ENCODE measurements at regions of chr1 and their contacts with region 1.

Region 1: GRCh38 chr1:57279909-57280666 is 143.8 kb downstream of the DAB1 start:
- DNase-seq: peak; percentile 82 to 84
- H3K4me3 ChIP-seq: no peak overlapping the region
- H3K4me3 Mint-ChIP-seq: peak overlapping the region; percentile 46
- H3K27ac Mint-ChIP-seq: peak overlapping the region; percentile 96
- H3K4me1 ChIP-seq: peaks cover 57% of the 10 kb centered on the region
- H3K4me1 Mint-ChIP-seq: peaks cover 35% of the 10 kb centered on the region
- H3K27me3 ChIP-seq: no peaks in the 10 kb centered on the region
- H3K27me3 Mint-ChIP-seq: no peaks in the 10 kb centered on the region
- CTCF ChIP-seq: no peak

Region 2: DNA sequence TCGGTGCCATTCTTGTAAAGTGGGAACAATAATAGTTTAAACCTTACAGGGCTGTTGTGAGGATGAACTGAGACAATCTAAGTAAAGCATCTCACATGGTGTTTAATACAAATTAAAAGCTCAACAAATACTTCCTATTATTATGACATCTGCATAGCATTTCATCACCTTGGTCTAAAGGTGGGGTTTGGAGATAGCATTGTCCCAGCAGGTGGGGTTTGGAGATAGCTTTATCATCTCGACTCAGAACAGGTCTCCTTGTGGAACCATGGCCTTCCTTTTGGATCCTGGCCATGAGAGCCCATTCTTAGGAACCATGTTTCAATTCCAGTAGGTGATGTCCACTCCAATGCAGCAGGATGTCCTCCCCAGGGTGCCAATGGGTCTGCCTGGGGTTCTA is 293.7 kb before region 1 on chr1:
- CTCF ChIA-PET with region 1: no interaction called
- POLR2A ChIA-PET with region 1: no interaction called
- intact Hi-C with region 1: loop called (anchors 2 kb)
- DNase-seq: no peak
- H3K4me3 ChIP-seq: no peak overlapping the region
- H3K4me3 Mint-ChIP-seq: no peak overlapping the region
- H3K27ac Mint-ChIP-seq: peak overlapping the region; percentile 67
- H3K4me1 ChIP-seq: peaks cover 25% of the 10 kb centered on the region
- H3K4me1 Mint-ChIP-seq: peaks cover 20% of the 10 kb centered on the region
- H3K27me3 ChIP-seq: no peaks in the 10 kb centered on the region
- H3K27me3 Mint-ChIP-seq: no peaks in the 10 kb centered on the region
- CTCF ChIP-seq: no peak

Region 3: DNA sequence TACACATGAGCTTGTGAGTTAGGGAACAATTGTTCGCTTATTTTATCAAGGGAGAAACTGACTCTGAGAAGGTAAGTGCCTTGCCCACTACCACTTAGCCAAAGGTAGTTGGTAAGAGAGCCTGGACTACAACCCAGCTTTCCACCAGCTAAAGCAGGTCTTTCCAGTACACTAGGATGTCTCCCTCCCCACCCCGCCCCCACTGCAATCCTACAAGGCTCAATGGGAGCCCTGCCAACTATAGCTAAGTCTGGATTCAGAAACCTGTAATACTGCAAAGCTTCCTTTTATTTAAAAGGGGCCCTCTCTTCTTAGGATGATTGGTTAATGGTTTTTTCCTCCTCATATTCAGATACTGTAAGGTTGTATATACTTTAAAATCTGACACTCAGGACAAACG is 212.2 kb before region 1 on chr1:
- CTCF ChIA-PET with region 1: no interaction called
- POLR2A ChIA-PET with region 1: no interaction called
- intact Hi-C with region 1: loop called (anchors 2 kb)
- DNase-seq: no peak
- H3K4me3 ChIP-seq: no peak overlapping the region
- H3K4me3 Mint-ChIP-seq: no peak overlapping the region
- H3K27ac Mint-ChIP-seq: no peak overlapping the region
- H3K4me1 ChIP-seq: peaks cover 16% of the 10 kb centered on the region
- H3K4me1 Mint-ChIP-seq: no peaks in the 10 kb centered on the region
- H3K27me3 ChIP-seq: no peaks in the 10 kb centered on the region
- H3K27me3 Mint-ChIP-seq: no peaks in the 10 kb centered on the region
- CTCF ChIP-seq: no peak

Region 4: GRCh38 chr1:57204942-57205787 is 74.9 kb before region 1 on chr1:
- CTCF ChIA-PET with region 1: no interaction called
- POLR2A ChIA-PET with region 1: no interaction called
- intact Hi-C with region 1: loop called (anchors 1 kb)
- DNase-seq: peak in 1 of 2 experiments; percentile 27
- H3K4me3 ChIP-seq: no peak overlapping the region
- H3K4me3 Mint-ChIP-seq: no peak overlapping the region
- H3K27ac Mint-ChIP-seq: peak overlapping the region; percentile 48
- H3K4me1 ChIP-seq: peaks cover 16% of the 10 kb centered on the region
- H3K4me1 Mint-ChIP-seq: peaks cover 28% of the 10 kb centered on the region
- H3K27me3 ChIP-seq: no peaks in the 10 kb centered on the region
- H3K27me3 Mint-ChIP-seq: no peaks in the 10 kb centered on the region
- CTCF ChIP-seq: no peak

Region 5: GRCh38 chr1:57238233-57238781 is 41.8 kb before region 1 on chr1:
- CTCF ChIA-PET with region 1: no interaction called
- POLR2A ChIA-PET with region 1: no interaction called
- intact Hi-C with region 1: loop called (anchors 2 kb)
- DNase-seq: no peak
- H3K4me3 ChIP-seq: no peak overlapping the region
- H3K4me3 Mint-ChIP-seq: no peak overlapping the region
- H3K27ac Mint-ChIP-seq: no peak overlapping the region
- H3K4me1 ChIP-seq: peaks cover 21% of the 10 kb centered on the region
- H3K4me1 Mint-ChIP-seq: peaks cover 8% of the 10 kb centered on the region
- H3K27me3 ChIP-seq: no peaks in the 10 kb centered on the region
- H3K27me3 Mint-ChIP-seq: no peaks in the 10 kb centered on the region
- CTCF ChIP-seq: no peak

Region 6: DNA sequence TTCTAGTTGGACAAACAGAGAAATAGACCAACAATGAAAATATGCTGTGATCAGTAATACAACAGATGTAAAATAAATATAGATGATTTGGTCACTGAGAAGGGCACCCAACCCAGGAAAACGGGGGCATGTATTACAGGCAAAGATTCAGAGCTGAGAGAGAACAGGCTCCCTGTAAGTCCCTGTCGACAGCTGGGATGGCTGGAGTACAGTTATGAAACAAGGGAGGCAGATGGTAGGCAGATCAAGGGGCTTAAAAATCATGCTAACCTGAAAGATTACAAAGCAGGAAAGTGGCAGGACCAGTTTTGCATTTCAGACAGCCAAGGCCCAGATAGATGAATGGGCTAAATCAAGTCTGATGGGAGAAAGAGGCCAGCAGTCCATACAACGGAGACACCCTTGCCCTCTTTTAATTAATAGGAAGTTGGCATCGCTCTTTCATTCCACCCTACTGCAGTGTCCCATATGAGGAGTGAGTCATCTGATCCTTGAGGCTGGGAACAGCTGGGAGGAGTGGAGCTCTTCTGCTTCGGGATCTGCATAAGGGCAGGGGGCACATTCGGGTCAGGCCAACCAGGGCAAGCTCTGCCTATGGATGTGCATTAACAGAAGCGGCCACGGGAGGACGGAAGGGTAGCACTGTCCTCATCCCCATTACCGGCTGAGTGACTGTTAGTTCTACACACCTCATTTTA is 27.3 kb before region 1 on chr1:
- CTCF ChIA-PET with region 1: no interaction called
- POLR2A ChIA-PET with region 1: no interaction called
- intact Hi-C with region 1: loop called (anchors 2 kb)
- DNase-seq: peak in 1 of 2 experiments; percentile 28
- H3K4me3 ChIP-seq: no peak overlapping the region
- H3K4me3 Mint-ChIP-seq: no peak overlapping the region
- H3K27ac Mint-ChIP-seq: no peak overlapping the region
- H3K4me1 ChIP-seq: peaks cover 5% of the 10 kb centered on the region; the same call in 1 of the 2 replicates
- H3K4me1 Mint-ChIP-seq: peaks cover 8% of the 10 kb centered on the region
- H3K27me3 ChIP-seq: no peaks in the 10 kb centered on the region
- H3K27me3 Mint-ChIP-seq: no peaks in the 10 kb centered on the region
- CTCF ChIP-seq: no peak

Region 7: GRCh38 chr1:57311006-57311405 is 30.9 kb after region 1 on chr1:
- CTCF ChIA-PET with region 1: interaction called, 3 read pairs
- POLR2A ChIA-PET with region 1: interaction called, 8 read pairs
- intact Hi-C with region 1: loop called (anchors 2 kb)
- DNase-seq: peak in 1 of 2 experiments; percentile 33
- H3K4me3 ChIP-seq: no peak overlapping the region
- H3K4me3 Mint-ChIP-seq: no peak overlapping the region
- H3K27ac Mint-ChIP-seq: no peak overlapping the region
- H3K4me1 ChIP-seq: peaks cover 5% of the 10 kb centered on the region
- H3K4me1 Mint-ChIP-seq: peaks cover 7% of the 10 kb centered on the region
- H3K27me3 ChIP-seq: no peaks in the 10 kb centered on the region
- H3K27me3 Mint-ChIP-seq: no peaks in the 10 kb centered on the region
- CTCF ChIP-seq: no peak